ENCODE measurements at regions of chr9 and their contacts with region 1.

Region 1: DNA sequence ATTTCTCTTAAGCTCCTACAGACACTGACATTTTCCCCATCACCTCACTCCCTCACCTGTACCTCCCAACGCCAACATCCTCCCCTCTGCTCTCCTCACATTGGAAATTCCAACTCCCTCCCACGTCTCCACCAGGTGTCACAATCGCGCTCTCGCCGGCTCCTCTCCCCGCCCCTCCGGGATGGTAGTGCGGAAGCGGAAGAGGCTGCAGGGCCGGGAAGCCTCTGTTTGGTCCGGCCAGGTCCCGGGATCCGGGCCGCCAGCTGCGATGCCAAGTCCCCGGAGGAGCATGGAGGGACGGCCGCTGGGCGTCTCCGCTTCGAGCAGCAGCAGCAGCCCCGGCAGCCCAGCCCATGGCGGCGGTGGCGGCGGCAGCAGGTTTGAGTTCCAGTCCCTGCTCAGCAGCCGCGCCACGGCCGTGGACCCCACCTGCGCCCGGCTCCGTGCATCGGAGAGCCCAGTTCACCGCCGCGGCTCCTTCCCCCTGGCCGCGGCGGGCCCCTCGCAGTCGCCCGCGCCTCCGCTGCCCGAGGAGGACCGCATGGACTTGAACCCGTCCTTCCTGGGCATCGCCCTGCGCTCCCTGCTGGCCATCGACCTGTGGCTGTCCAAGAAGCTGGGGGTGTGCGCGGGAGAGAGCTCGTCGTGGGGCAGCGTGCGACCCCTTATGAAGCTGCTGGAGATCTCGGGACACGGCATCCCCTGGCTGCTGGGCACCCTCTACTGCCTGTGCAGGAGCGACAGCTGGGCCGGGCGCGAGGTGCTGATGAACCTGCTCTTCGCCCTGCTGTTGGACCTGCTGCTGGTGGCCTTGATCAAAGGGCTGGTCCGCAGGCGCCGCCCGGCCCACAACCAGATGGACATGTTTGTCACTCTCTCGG is at the start of gene PLPP6:
- DNase-seq: peak; percentile 80
- ATAC-seq: peak; percentile 86
- H3K4me3 Mint-ChIP-seq: peak within 1 kb of the TSS; percentile 95
- H3K27ac Mint-ChIP-seq: peak within 1 kb of the TSS; percentile 92
- H3K4me1 Mint-ChIP-seq: peaks cover 43% of the 10 kb centered on the region
- H3K27me3 Mint-ChIP-seq: peaks cover 5% of the 10 kb centered on the region
- total RNA-seq, gene PLPP6: 11.8 to 12.4 TPM

Region 2: DNA sequence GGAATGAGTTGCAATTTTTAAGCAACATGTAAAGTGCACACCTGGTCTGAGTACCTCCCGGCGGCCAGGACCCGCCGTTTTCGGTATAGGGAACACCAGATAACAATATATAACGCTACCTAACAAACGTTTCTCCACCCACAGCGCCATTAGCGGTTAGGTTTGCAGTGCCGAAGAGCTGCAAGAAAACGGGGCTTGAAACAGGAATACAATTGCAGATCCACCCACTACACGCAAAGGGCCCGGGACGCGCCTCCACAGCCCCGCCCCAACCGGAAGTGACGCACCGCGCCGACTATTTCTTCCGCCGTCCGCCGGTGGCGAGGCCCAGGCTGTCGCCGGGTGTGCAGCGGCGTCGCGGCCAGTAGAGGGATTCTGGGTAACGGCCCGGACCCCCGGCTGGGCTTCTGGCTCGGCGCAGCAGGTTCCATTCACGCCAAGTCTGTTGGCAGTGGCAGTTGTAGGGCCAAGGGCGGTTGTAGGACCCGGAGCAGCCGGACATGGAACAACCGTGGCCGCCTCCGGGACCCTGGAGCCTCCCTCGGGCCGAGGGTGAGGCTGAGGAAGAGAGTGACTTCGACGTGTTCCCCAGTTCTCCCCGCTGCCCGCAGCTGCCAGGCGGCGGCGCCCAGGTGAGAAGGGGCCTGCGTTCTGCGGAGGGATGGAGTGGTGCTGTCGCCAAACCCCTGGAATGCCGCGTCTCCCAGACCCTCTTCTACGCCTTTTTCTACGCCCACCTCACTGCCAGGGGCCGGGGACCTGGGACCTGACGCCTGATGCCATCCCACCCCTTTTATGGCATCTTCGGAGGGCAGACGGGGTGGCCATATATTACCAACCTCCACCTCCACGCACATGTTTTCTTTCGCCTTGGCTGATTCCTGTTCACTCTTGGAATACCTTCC is 17.2 kb after region 1 on chr9 and contains the start of gene CDC37L1:
- POLR2A ChIA-PET with region 1: interaction called, 10 read pairs
- DNase-seq: peak; percentile 100
- ATAC-seq: peak; percentile 95
- H3K4me3 Mint-ChIP-seq: no peak within 1 kb of the TSS
- H3K27ac Mint-ChIP-seq: no peak within 1 kb of the TSS
- H3K4me1 Mint-ChIP-seq: peaks cover 5% of the 10 kb centered on the region
- H3K27me3 Mint-ChIP-seq: no peaks in the 10 kb centered on the region
- total RNA-seq, gene CDC37L1: 14.4 to 14.6 TPM

Region 3: DNA sequence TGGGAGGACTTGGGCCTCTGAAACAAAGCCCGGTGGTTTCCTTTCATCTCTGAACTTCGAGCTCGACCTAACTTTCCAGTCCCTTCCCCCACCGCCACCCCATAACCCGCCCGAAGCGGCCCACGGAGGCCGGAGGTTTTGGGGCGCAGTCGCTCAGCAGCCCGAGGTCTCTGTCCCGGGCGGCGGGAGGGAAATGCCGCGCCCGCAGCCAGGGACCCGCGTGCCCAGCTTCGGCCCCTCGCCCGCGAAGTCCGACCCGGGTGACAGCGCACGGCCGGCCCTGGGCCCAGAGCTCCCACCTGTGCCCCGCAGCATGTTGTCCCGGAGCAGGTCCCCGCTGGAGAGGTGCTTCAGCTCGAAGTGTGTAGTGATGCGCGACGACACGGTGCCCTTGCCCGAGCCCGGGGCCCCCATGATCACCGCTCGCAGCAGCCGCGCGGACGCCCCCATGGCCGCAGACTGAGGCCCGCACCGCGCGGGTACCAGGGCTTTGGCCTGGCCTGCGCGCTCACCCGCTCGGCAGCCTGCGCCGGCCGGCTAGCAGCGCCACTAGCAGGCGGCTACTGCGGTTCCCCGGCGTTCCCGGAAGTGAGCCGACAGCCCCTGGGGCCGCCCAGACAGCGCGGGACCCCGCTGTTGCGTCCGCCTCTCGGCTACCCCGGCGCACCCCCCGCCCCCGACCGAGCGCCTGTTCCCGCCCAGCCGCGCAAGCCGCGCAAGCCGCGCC is 78.5 kb after region 1 on chr9 and contains the start of gene AK3:
- POLR2A ChIA-PET with region 1: interaction called, 12 read pairs
- DNase-seq: peak; percentile 90
- ATAC-seq: peak; percentile 95
- H3K4me3 Mint-ChIP-seq: peak within 1 kb of the TSS; percentile 87
- H3K27ac Mint-ChIP-seq: peak within 1 kb of the TSS; percentile 89
- H3K4me1 Mint-ChIP-seq: peaks cover 27% of the 10 kb centered on the region
- H3K27me3 Mint-ChIP-seq: no peaks in the 10 kb centered on the region
- total RNA-seq, gene AK3: 40.1 to 41.7 TPM